ENCODE measurements at regions of chr3 and their contacts with region 1.

Region 1: GRCh38 chr3:101573449-101574387 is at the start of gene PCNP:
- DNase-seq: peak; percentile 98
- ATAC-seq: peak; percentile 90
- H3K4me3 Mint-ChIP-seq: peak within 1 kb of the TSS; percentile 99
- H3K27ac Mint-ChIP-seq: peak within 1 kb of the TSS; percentile 100
- H3K4me1 Mint-ChIP-seq: peaks cover 24% of the 10 kb centered on the region
- H3K27me3 Mint-ChIP-seq: no peaks in the 10 kb centered on the region
- CTCF ChIP-seq: peak; percentile 87
- total RNA-seq, gene PCNP: 187 to 193 TPM (median 192 TPM) in 3 replicates

Region 2: GRCh38 chr3:101561630-101562328 is 11.9 kb before region 1 on chr3 and contains the start of gene TRMT10C:
- CTCF ChIA-PET with region 1: interaction called, 18 read pairs
- POLR2A ChIA-PET with region 1: interaction called, 9 read pairs
- DNase-seq: peak; percentile 93
- ATAC-seq: peak; percentile 98
- H3K4me3 Mint-ChIP-seq: peak within 1 kb of the TSS; percentile 96
- H3K27ac Mint-ChIP-seq: peak within 1 kb of the TSS; percentile 98
- H3K4me1 Mint-ChIP-seq: peaks cover 20% of the 10 kb centered on the region
- H3K27me3 Mint-ChIP-seq: no peaks in the 10 kb centered on the region; the same call in 1 of the 2 replicates
- CTCF ChIP-seq: no peak
- total RNA-seq, gene TRMT10C: 35.2 to 41.7 TPM (median 36.3 TPM) in 3 replicates

Region 3: DNA sequence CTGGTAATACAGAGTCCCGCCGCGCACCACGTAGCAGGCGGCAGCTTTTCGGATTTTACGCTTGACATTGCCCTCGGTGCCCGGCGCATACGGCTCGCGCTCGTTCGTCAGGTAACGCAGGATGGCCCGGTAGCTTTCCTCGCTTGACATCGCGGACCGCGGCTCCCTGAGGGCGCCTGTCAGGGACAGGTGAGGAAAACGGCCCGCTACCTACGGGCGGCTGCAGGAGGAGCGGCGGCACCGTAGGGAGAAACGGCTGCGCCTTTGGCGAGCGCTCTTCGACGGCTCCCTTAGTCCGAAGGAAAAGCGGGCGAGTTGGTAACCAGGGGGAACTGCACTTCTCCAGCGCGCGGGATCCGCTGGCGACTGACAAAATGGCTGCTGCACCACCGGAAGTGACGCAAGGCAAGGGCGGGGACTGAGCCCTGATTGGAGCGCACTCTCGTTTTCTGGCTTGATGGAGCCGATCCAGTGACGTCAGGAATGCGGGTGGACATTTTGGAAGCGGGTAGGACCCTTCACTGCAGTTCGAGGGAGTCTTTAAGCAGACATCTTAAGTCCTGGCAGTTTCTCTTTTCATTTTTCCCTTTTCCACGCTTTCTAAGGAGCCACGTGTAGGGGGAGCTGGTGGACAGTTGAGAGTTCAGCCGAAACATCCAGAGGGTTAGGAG is 103.2 kb after region 1 on chr3 and contains the start of gene ZBTB11:
- CTCF ChIA-PET with region 1: interaction called, 7 read pairs
- POLR2A ChIA-PET with region 1: interaction called, 31 read pairs
- DNase-seq: peak; percentile 100
- ATAC-seq: peak; percentile 68
- H3K4me3 Mint-ChIP-seq: peak within 1 kb of the TSS; percentile 95
- H3K27ac Mint-ChIP-seq: peak within 1 kb of the TSS; percentile 98
- H3K4me1 Mint-ChIP-seq: peaks cover 28% of the 10 kb centered on the region
- H3K27me3 Mint-ChIP-seq: no peaks in the 10 kb centered on the region
- CTCF ChIP-seq: no peak
- total RNA-seq, gene ZBTB11: 12.6 to 13.5 TPM (median 12.7 TPM) in 3 replicates

Region 4: GRCh38 chr3:101809178-101810021 is 235.7 kb after region 1 on chr3:
- CTCF ChIA-PET with region 1: no interaction called
- POLR2A ChIA-PET with region 1: no interaction called
- DNase-seq: no peak
- ATAC-seq: no peak
- H3K4me3 Mint-ChIP-seq: no peak overlapping the region
- H3K27ac Mint-ChIP-seq: peak overlapping the region; percentile 36; the same call in 1 of the 2 replicates
- H3K4me1 Mint-ChIP-seq: peaks cover 15% of the 10 kb centered on the region
- H3K27me3 Mint-ChIP-seq: no peaks in the 10 kb centered on the region
- CTCF ChIP-seq: peak; percentile 36; the same call in 1 of the 2 replicates

Measured in WTC11 (cell line).